AG04450 (cell line): ENCODE measurements at regions of chr6 and their contacts with region 1.

Region 1: DNA sequence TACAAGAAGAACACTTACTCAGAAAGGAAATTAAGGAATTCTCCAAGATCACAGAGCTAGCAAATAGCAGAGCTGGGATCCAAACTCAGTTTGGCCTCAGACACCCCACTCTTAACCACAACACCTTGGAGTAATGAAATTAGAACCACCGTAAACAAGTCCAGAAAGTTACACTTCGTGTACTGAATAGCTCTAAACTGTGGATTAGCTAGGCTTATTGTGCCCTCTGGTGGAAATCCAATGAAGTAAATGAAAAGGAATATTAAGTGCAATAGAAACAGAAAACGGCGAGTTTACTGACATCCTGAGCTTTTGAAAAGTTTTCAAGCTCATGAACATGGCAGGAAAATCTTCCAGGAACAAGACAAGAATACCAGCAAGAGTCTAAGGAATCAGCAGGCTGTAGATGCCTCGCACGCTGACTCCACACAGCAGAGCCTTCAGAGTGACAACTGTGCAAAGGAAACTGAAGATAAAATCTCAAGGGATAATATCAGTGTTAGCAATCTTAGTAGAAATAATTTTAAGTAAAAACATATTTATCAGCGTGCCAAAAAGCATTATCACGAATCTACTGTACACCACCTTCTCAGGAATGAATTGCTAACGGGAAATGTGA is 34.6 kb downstream of the FBXO5 start:
- DNase-seq: peak; percentile 3
- H3K4me3 ChIP-seq: no peak overlapping the region; the same call in 1 of the 2 replicates
- H3K27ac ChIP-seq: no peak overlapping the region
- H3K27me3 ChIP-seq: no peaks in the 10 kb centered on the region
- CTCF ChIP-seq: peak; percentile 72

Region 2: DNA sequence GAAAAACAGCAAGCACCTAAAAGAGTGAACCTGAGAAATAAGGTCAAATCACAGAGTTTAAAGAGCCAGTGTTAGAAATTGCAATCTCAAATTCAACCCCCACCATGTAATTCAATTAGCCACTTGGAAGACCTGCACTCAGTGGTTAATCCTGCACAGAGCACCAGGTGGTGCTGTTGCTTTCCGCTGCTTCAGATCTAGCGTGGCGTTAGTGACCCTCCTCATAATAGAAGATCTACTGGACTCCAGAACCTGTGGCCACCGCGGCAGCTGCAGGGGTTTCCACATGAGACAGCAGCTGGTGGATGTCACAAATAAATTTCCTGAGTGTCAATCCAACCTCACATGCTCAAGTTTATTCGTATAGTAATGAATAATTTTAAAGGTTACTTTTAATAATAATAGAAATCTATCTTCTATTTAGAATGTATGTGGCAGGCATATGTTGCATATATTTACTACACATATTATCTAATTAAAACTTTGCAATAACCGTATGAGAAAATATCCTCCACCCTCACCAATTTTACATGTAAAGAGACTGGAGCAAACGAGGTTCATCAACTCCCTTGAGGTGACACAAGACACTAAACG is 395.5 kb before region 1 on chr6:
- CTCF ChIA-PET with region 1: interaction called, 13 read pairs
- POLR2A ChIA-PET with region 1: no interaction called
- DNase-seq: peak; percentile 37
- H3K4me3 ChIP-seq: no peak overlapping the region
- H3K27ac ChIP-seq: no peak overlapping the region
- H3K27me3 ChIP-seq: no peaks in the 10 kb centered on the region
- CTCF ChIP-seq: peak; percentile 97

Region 3: GRCh38 chr6:152750694-152751093 is 197.6 kb before region 1 on chr6 and contains the start of gene VIP:
- CTCF ChIA-PET with region 1: interaction called, 72 read pairs
- POLR2A ChIA-PET with region 1: no interaction called
- DNase-seq: no peak
- H3K4me3 ChIP-seq: no peak within 1 kb of the TSS
- H3K27ac ChIP-seq: no peak within 1 kb of the TSS
- H3K27me3 ChIP-seq: no peaks in the 10 kb centered on the region
- CTCF ChIP-seq: no peak
- polyA plus RNA-seq, gene VIP: not detected in 2 replicates

Region 4: GRCh38 chr6:152874846-152875568 is 73.3 kb before region 1 on chr6:
- CTCF ChIA-PET with region 1: interaction called, 14 read pairs
- POLR2A ChIA-PET with region 1: no interaction called
- DNase-seq: no peak
- H3K4me3 ChIP-seq: no peak overlapping the region
- H3K27ac ChIP-seq: no peak overlapping the region
- H3K27me3 ChIP-seq: no peaks in the 10 kb centered on the region
- CTCF ChIP-seq: no peak

Region 5: GRCh38 chr6:152969688-152970418 is 21.6 kb after region 1 on chr6:
- CTCF ChIA-PET with region 1: interaction called, 12 read pairs
- POLR2A ChIA-PET with region 1: no interaction called
- DNase-seq: no peak
- H3K4me3 ChIP-seq: no peak overlapping the region
- H3K27ac ChIP-seq: no peak overlapping the region
- H3K27me3 ChIP-seq: no peaks in the 10 kb centered on the region
- CTCF ChIP-seq: no peak

Region 6: DNA sequence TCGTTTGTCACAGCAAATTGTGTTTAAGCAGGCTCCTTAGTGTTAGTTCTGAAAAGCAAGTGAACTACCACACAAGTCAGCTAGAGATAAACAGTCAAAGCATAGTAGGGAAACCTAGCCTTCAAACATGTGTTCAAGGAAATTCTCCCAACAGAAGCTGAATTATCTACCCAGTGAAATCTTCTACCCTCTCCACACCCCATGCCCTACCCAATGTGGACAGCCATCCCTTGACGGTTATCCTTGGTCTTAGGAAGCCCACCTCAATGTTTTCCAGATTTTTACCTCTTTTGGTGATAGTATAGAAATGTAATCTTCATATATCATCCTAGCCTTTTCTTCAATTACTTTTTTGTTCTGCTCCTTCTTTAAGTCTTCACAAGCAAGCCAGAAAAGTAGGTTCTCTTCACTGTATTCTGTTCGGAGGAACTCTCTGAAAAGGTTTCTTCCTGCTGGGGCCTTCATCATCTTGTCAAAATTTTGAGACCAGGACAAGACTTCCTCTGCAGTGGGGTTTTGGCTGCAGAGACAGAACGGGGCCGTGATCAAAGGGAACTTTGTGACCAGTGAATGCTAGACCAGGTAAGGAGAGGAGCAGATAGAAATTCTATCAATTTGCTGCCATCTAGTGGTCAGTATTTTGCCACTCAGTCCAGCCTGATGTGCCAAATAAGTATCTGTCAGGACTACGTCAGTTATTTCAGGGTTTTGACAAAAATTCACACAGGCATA is 75.9 kb after region 1 on chr6:
- CTCF ChIA-PET with region 1: interaction called, 11 read pairs
- POLR2A ChIA-PET with region 1: no interaction called
- DNase-seq: no peak
- H3K4me3 ChIP-seq: no peak overlapping the region
- H3K27ac ChIP-seq: no peak overlapping the region
- H3K27me3 ChIP-seq: no peaks in the 10 kb centered on the region
- CTCF ChIP-seq: peak; percentile 76